Calu3 (cell line): ENCODE measurements at regions of chr17 and their contacts with region 1.

Region 1: GRCh38 chr17:59106463-59107305 is at the start of gene TRIM37:
- DNase-seq: peak; percentile 96
- H3K4me3 Mint-ChIP-seq: peak within 1 kb of the TSS; percentile 99
- H3K27ac Mint-ChIP-seq: peak within 1 kb of the TSS; percentile 81
- H3K4me1 Mint-ChIP-seq: no peaks in the 10 kb centered on the region
- H3K27me3 Mint-ChIP-seq: no peaks in the 10 kb centered on the region
- CTCF ChIP-seq: no peak
- total RNA-seq, gene TRIM37: 16.2 and 17.2 TPM in 2 replicates

Region 2: GRCh38 chr17:59062509-59062908 is 44.2 kb before region 1 on chr17:
- CTCF ChIA-PET with region 1: no interaction called
- intact Hi-C with region 1: no loop called
- DNase-seq: no peak
- H3K4me3 Mint-ChIP-seq: no peak overlapping the region
- H3K27ac Mint-ChIP-seq: no peak overlapping the region
- H3K4me1 Mint-ChIP-seq: no peaks in the 10 kb centered on the region
- H3K27me3 Mint-ChIP-seq: no peaks in the 10 kb centered on the region
- CTCF ChIP-seq: no peak

Region 3: GRCh38 chr17:59155439-59156182 is 48.9 kb after region 1 on chr17 and contains the start of gene PRR11:
- CTCF ChIA-PET with region 1: interaction called, 6 read pairs
- intact Hi-C with region 1: loop called (anchors 10 kb)
- DNase-seq: peak; percentile 88
- H3K4me3 Mint-ChIP-seq: no peak within 1 kb of the TSS
- H3K27ac Mint-ChIP-seq: no peak within 1 kb of the TSS
- H3K4me1 Mint-ChIP-seq: peaks cover 28% of the 10 kb centered on the region
- H3K27me3 Mint-ChIP-seq: no peaks in the 10 kb centered on the region
- CTCF ChIP-seq: no peak
- total RNA-seq, gene PRR11: 41.4 and 52.7 TPM in 2 replicates